ENCODE measurements at regions of chr17 and their contacts with region 1.

Region 1: GRCh38 chr17:8016632-8017478 is 14.4 kb downstream of the GUCY2D start:
- DNase-seq: no peak
- H3K4me3 ChIP-seq: peak overlapping the region in 1 of 3 experiments; percentile 42
- H3K27ac ChIP-seq: no peak overlapping the region
- H3K4me1 ChIP-seq: peaks cover 48% of the 10 kb centered on the region
- H3K27me3 ChIP-seq: no peaks in the 10 kb centered on the region
- CTCF ChIP-seq: peak; percentile 80 to 83

Region 2: GRCh38 chr17:7944326-7944725 is 72.5 kb before region 1 on chr17:
- CTCF ChIA-PET with region 1: no interaction called
- dilution Hi-C with region 1: no loop called
- in situ Hi-C with region 1: no loop called
- intact Hi-C with region 1: no loop called
- DNase-seq: no peak
- H3K4me3 ChIP-seq: no peak overlapping the region
- H3K27ac ChIP-seq: no peak overlapping the region
- H3K4me1 ChIP-seq: no peaks in the 10 kb centered on the region
- H3K27me3 ChIP-seq: no peaks in the 10 kb centered on the region
- CTCF ChIP-seq: no peak

Region 3: GRCh38 chr17:7989781-7990655 is 26.8 kb before region 1 on chr17:
- CTCF ChIA-PET with region 1: no interaction called
- dilution Hi-C with region 1: no loop called
- in situ Hi-C with region 1: no loop called
- intact Hi-C with region 1: loop called (anchors 1 kb)
- DNase-seq: peak; percentile 65
- H3K4me3 ChIP-seq: peak overlapping the region; percentile 55 to 76 (median 55)
- H3K27ac ChIP-seq: peak overlapping the region; percentile 26
- H3K4me1 ChIP-seq: peaks cover 21% of the 10 kb centered on the region
- H3K27me3 ChIP-seq: no peaks in the 10 kb centered on the region
- CTCF ChIP-seq: peak; percentile 85 to 96

Region 4: DNA sequence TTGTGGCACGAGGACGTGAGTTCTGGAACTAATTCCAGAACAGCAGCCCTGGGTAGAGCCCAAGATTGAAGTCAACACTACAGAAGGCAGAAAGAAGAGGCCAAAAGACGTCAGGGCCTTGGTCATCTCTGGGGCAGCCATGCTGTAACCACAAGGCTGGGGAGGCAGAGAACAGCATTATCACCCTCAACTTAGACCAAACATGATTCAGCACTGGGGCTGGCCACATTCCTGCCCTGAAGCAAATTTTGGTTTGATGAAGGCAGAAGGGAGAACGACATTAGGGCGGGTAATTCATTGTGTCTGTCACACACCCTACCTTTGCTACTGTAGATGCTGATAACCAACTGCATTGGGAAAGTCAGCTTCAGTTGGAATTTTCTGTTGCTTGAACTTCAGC is 12.3 kb after region 1 on chr17:
- CTCF ChIA-PET with region 1: no interaction called
- dilution Hi-C with region 1: no loop called
- in situ Hi-C with region 1: no loop called
- intact Hi-C with region 1: loop called (anchors 1 kb)
- DNase-seq: peak; percentile 95
- H3K4me3 ChIP-seq: no peak overlapping the region
- H3K27ac ChIP-seq: peak overlapping the region; percentile 10
- H3K4me1 ChIP-seq: peaks cover 11% of the 10 kb centered on the region
- H3K27me3 ChIP-seq: no peaks in the 10 kb centered on the region
- CTCF ChIP-seq: no peak